Cardiac septum (tissue), 1 donor: ENCODE measurements at regions of chr16 and their contacts with region 1.

Region 1: GRCh38 chr16:49608779-49609178 is 235.2 kb downstream of the C16orf78 start:
- DNase-seq: peak; percentile 43

Region 2: DNA sequence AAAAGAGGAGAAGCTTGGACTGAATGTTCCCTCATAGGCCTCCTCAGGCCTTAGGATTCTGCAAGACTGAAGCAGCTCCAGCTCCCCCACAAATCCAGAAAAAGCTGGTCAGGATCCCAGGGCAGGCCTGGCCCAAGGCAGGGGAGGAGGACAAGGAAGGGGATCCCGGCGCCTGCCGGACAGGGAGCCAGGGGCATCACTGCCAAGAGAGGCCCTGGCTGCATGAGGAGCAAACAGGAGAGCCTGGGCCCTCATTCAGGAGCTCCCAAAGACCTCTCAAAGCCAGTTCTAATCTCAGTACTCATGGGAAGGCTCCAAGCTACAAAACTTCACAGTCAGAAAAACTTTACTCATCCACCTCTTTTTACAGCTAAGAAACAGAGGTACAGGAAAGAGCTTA is 179.8 kb after region 1 on chr16:
- intact Hi-C with region 1: no loop called
- DNase-seq: no peak

Region 3: DNA sequence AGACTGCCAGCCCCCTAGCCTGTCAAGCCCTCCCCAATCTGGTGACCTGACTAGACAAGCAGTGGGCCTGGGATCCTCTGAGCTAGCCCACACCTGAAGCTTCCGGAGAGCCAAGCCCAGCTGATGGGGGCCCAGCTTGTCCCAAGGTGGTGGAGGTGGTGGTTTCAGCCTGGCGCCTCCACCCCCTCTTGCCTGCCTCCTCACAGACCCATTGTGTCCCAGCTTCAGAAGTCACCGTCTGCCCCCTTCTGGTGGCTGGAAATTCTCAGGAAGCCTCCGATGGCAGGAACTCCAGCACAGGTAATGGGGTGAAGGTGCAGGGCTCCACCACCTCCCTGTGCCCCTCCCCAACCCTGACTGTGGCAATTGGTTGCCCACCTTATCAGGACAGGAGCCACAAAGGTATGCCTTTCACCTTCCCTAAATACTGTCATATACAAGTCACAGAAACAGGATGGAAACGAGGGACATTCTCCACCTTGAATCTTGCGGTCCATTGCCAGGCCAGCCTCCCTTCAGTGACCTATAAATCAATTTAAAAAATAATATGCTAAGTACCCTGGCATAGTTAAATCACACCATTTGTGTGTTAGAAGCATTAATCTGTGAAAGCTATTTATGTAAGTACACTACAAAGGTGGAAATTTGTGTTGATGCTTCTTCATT is 313.1 kb after region 1 on chr16:
- intact Hi-C with region 1: loop called (anchors 10 kb)
- DNase-seq: peak; percentile 76